Naive thymus-derived CD4-positive, alpha-beta T cell (primary cell): ENCODE measurements at regions of chr2 and their contacts with region 1.

Region 1: GRCh38 chr2:172914341-172915004 is 161.2 kb upstream of the MAP3K20 start:
- DNase-seq: no peak
- ATAC-seq: no peak
- H3K4me3 ChIP-seq: no peak overlapping the region
- H3K4me3 Mint-ChIP-seq: no peak overlapping the region
- H3K27ac ChIP-seq: no peak overlapping the region
- H3K27ac Mint-ChIP-seq: peak overlapping the region in 1 of 9 donors; percentile 12
- H3K4me1 ChIP-seq: no peaks in the 10 kb centered on the region
- H3K4me1 Mint-ChIP-seq: peaks cover 0 to 44% (median 26%) of the 10 kb centered on the region in 7 donors
- H3K27me3 ChIP-seq: no peaks in the 10 kb centered on the region
- H3K27me3 Mint-ChIP-seq: peaks cover 0 to 15% (median 1%) of the 10 kb centered on the region in 5 donors

Region 2: DNA sequence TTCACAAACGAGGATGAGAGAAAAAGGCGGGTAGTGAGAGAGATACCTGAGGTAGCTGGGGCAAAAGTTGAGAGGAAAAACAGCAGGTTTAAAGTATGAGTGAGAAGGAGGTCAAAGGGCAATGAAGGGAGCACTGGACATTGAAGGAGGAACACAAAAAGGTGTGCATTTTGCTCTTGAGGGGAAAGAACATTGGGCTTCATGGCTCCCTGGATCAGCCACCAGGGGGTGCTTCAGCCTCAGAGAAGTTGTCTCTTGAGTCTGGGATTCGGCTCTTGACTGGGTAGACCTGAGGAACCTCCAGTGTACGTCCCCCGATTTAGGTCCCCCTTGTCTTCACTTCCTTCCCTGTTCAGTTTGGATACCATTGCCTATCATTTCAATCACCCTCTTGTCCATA is 50.3 kb before region 1 on chr2:
- CTCF ChIA-PET with region 1: no interaction called
- POLR2A ChIA-PET with region 1: no interaction called
- intact Hi-C with region 1: loop called in 1 of 2 experiments (anchors 5 kb)
- DNase-seq: peak in 8 of 9 donors; percentile 11 to 61 (median 38)
- ATAC-seq: no peak
- H3K4me3 ChIP-seq: no peak overlapping the region
- H3K4me3 Mint-ChIP-seq: no peak overlapping the region
- H3K27ac ChIP-seq: no peak overlapping the region
- H3K27ac Mint-ChIP-seq: no peak overlapping the region
- H3K4me1 ChIP-seq: no peaks in the 10 kb centered on the region
- H3K4me1 Mint-ChIP-seq: no peaks in the 10 kb centered on the region
- H3K27me3 ChIP-seq: no peaks in the 10 kb centered on the region
- H3K27me3 Mint-ChIP-seq: peaks cover 15 to 29% (median 20%) of the 10 kb centered on the region in 5 donors